Natural killer cell (primary cell): ENCODE measurements at regions of chr18 and their contacts with region 1.

Region 1: GRCh38 chr18:23231340-23232021 is 96.2 kb downstream of the CABLES1 start:
- DNase-seq: peak; percentile 64 to 91
- ATAC-seq: peak; percentile 83 to 94 (median 89)
- H3K4me3 ChIP-seq: no peak overlapping the region
- H3K4me3 Mint-ChIP-seq: peak overlapping the region; percentile 86
- H3K27ac ChIP-seq: peak overlapping the region; percentile 82
- H3K27ac Mint-ChIP-seq: peak overlapping the region; percentile 95 to 96
- H3K4me1 ChIP-seq: peaks cover 31% of the 10 kb centered on the region
- H3K4me1 Mint-ChIP-seq: peaks cover 24 to 31% of the 10 kb centered on the region in 2 donors
- H3K27me3 ChIP-seq: no peaks in the 10 kb centered on the region
- H3K27me3 Mint-ChIP-seq: no peaks in the 10 kb centered on the region
- CTCF ChIP-seq: no peak

Region 2: DNA sequence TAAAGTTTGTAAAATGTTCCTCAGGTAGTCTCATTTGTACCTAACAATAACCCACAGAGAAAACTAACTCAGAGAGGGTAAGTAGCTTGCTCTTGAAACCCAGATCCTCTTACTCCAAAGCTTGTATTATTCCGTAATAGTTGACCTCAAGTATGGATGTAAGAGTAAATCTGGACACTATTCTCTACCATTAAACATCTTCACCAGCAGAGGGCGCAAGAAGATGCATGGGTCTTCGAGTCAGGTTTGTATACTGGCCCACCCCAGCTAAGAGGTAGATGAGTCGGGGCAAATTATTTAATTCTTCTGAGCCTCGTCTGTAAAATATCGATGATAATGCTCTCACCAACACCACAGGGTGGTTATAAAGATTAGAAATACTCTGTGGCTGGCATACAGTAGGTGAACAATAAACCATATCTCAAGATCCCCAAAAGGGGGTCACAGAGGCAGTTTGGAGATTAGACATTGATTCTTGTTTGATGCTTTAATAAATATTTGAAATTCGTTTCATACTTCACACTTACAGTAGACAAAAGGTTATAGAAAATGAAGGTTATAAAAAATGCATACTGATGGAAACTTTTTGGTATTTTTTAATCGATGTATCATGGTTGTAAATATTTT is 99.7 kb before region 1 on chr18:
- intact Hi-C with region 1: loop called (anchors 5 kb)
- DNase-seq: peak; percentile 32 to 88
- ATAC-seq: peak; percentile 60 to 68 (median 64)
- H3K4me3 ChIP-seq: no peak overlapping the region
- H3K4me3 Mint-ChIP-seq: peak overlapping the region; percentile 37
- H3K27ac ChIP-seq: no peak overlapping the region
- H3K27ac Mint-ChIP-seq: no peak overlapping the region
- H3K4me1 ChIP-seq: peaks cover 24% of the 10 kb centered on the region
- H3K4me1 Mint-ChIP-seq: peaks cover 12 to 15% of the 10 kb centered on the region in 2 donors
- H3K27me3 ChIP-seq: peaks cover 22% of the 10 kb centered on the region
- H3K27me3 Mint-ChIP-seq: peaks cover 21 to 23% of the 10 kb centered on the region in 2 donors
- CTCF ChIP-seq: peak; percentile 90

Region 3: GRCh38 chr18:23257811-23258565 is 26.5 kb after region 1 on chr18:
- intact Hi-C with region 1: loop called (anchors 1 kb)
- DNase-seq: no peak
- ATAC-seq: peak in 2 of 3 donors; percentile 17 to 32
- H3K4me3 ChIP-seq: no peak overlapping the region
- H3K4me3 Mint-ChIP-seq: peak overlapping the region; percentile 6
- H3K27ac ChIP-seq: no peak overlapping the region
- H3K27ac Mint-ChIP-seq: peak overlapping the region in 1 of 2 donors; percentile 88
- H3K4me1 ChIP-seq: peaks cover 34% of the 10 kb centered on the region
- H3K4me1 Mint-ChIP-seq: peaks cover 32 to 35% of the 10 kb centered on the region in 2 donors
- H3K27me3 ChIP-seq: no peaks in the 10 kb centered on the region
- H3K27me3 Mint-ChIP-seq: peaks cover 0 to 11% of the 10 kb centered on the region in 2 donors
- CTCF ChIP-seq: no peak

Region 4: GRCh38 chr18:23307567-23308295 is 76.2 kb after region 1 on chr18:
- intact Hi-C with region 1: loop called (anchors 1 kb)
- DNase-seq: peak; percentile 32 to 49
- ATAC-seq: peak; percentile 33 to 61 (median 54)
- H3K4me3 ChIP-seq: no peak overlapping the region
- H3K4me3 Mint-ChIP-seq: peak overlapping the region; percentile 88
- H3K27ac ChIP-seq: peak overlapping the region; percentile 80
- H3K27ac Mint-ChIP-seq: peak overlapping the region; percentile 86 to 97
- H3K4me1 ChIP-seq: peaks cover 40% of the 10 kb centered on the region
- H3K4me1 Mint-ChIP-seq: peaks cover 54 to 56% of the 10 kb centered on the region in 2 donors
- H3K27me3 ChIP-seq: no peaks in the 10 kb centered on the region
- H3K27me3 Mint-ChIP-seq: peaks cover 0 to 4% of the 10 kb centered on the region in 2 donors
- CTCF ChIP-seq: no peak

Region 5: DNA sequence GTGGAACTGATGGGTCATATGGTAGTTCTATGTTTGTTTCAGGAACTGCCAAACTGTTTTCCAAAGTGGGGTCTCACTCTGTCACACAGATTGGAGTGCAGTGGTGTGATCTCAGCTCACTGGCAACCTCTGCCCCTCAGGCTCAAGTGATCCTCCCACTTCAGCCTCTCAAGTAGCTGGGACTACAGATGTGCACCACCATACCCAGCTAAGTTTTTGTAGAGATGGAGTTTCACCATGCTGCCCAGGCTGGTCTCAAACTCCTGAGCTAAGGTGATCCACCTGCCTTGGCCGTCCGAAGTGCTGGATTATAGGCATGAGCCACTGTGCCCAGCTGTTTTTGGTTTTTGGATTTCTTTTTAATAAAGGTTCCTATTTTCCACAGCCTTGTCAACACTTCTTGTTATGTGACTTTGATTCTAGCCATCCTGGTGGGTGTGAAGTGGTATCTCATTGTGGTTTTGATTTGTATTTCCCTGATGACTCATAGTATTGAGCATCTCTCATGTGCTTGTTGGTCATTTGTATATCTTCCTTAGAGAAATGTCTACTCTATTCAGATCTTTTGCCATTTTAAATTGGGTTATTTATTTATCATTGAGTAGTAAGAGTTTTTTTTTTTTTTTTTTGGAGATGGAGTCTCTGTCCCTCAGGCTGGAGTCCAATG is 332.0 kb after region 1 on chr18:
- intact Hi-C with region 1: loop called (anchors 10 kb)
- DNase-seq: peak in 1 of 2 donors; percentile 61
- ATAC-seq: peak; percentile 88 to 97 (median 90)
- H3K4me3 ChIP-seq: no peak overlapping the region
- H3K4me3 Mint-ChIP-seq: peak overlapping the region; percentile 10
- H3K27ac ChIP-seq: peak overlapping the region; percentile 8
- H3K27ac Mint-ChIP-seq: peak overlapping the region; percentile 85 to 99
- H3K4me1 ChIP-seq: peaks cover 14% of the 10 kb centered on the region
- H3K4me1 Mint-ChIP-seq: peaks cover 23 to 36% of the 10 kb centered on the region in 2 donors
- H3K27me3 ChIP-seq: no peaks in the 10 kb centered on the region
- H3K27me3 Mint-ChIP-seq: no peaks in the 10 kb centered on the region
- CTCF ChIP-seq: no peak

Region 6: GRCh38 chr18:23703057-23703986 is 471.8 kb after region 1 on chr18:
- intact Hi-C with region 1: no loop called
- DNase-seq: peak in 1 of 2 donors; percentile 68
- ATAC-seq: peak in 2 of 3 donors; percentile 64 to 74
- H3K4me3 ChIP-seq: no peak overlapping the region
- H3K4me3 Mint-ChIP-seq: no peak overlapping the region
- H3K27ac ChIP-seq: no peak overlapping the region
- H3K27ac Mint-ChIP-seq: no peak overlapping the region
- H3K4me1 ChIP-seq: no peaks in the 10 kb centered on the region
- H3K4me1 Mint-ChIP-seq: no peaks in the 10 kb centered on the region
- H3K27me3 ChIP-seq: no peaks in the 10 kb centered on the region
- H3K27me3 Mint-ChIP-seq: peaks cover 20 to 36% of the 10 kb centered on the region in 2 donors
- CTCF ChIP-seq: peak; percentile 38